AG04449 (cell line): ENCODE measurements at regions of chr11 and their contacts with region 1.

Region 1: DNA sequence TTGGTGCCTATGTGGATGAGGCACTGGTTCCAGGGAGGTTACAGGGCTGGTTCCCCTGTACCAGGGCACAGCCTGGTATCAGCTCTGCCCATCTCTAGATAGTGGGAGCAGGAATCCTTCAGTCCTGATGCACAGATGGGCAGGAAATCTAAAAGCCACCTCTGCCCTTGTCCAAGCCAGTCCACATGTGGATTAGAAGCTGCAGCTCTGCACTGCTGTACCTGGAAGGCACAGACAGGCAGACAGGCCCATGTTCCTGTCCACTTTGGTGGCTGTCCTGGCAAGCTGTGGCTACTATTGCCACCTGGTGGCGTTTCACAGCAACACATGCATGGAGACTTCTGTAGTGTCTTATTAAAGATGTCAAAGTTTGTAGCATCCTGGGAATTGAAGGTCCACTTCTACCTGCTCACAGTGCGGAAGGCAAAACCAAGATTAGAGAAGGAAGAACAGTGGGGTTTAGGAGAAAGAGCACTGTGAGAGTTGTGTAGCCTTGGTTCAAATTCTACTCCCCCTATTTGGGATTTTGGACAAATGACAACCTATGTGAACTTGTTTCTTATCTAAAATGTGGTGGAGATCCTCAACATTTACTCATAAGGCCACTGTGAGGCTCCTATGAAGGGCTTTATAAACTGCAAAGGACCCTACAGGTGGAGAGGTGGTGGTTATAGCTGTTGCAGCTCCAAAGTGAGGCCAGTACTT is 30.1 kb downstream of the NAV2 start:
- DNase-seq: no peak
- H3K4me3 ChIP-seq: no peak overlapping the region
- CTCF ChIP-seq: peak; percentile 78

Region 2: DNA sequence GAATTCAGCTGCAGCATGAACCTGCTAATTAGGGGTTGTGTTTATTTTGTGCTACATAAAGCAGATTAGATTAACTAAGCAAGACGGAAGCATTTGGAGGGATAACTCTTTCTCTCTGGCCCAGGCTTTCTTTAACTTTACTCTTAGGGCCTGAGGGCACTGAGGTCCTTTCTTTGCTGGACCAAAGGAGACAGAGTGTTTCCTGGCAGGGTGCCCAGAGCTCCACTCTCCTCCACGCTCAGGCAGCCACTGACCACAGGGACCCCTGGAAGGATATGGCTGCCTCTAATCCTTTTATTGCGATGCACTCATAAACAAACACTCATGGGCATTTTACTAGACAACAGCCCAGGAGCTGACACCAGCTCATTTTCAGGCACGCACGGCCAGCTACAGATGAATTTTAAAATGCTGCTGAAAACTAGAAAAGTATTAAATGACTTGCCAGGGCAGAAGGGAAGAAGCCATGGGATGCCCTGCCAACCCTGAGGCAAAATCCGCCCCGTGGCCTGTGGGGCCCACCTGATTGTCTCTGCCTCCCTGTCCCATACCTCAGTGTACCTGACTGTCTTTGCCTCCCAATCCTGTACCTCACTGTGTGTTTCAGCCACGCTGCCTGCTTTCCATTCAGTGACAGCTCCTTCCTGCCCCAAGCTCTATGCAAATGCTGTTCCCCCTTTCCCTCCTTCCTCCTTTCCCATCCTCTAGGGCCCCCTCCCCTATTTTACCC is 222.7 kb before region 1 on chr11:
- CTCF ChIA-PET with region 1: no interaction called
- POLR2A ChIA-PET with region 1: no interaction called
- DNase-seq: no peak
- H3K4me3 ChIP-seq: no peak overlapping the region
- CTCF ChIP-seq: no peak

Region 3: DNA sequence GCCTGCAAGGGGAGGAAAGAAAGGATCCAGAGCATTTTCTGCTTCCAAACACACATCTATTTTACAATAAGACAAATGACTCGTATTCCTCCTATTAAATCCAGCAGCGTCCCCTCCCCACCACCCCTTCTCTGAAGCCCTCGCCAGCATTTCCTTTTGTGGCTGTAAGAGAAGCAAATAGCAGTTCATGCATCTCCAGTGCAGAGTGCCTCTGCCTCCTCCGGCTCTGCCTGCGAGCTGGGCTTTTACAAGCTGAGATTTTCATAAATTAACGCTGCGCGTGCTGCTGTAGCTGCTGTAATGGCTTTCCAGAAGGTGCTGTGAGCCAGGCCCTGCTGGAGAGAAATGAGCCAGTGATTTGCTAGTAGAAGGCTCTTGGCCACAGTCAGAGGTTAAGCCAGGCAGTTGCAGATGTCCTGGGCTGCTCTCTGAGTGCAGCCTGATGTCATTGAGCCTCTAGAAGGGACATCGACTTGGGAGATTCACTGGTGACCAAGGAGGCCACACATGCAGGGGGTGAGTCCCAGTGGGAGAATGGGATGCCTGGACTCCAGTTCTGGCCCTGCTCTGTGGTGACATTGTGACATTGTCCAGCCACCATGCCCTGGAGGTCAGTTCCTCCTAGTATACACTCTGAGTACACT is 164.6 kb before region 1 on chr11:
- CTCF ChIA-PET with region 1: interaction called, 81 read pairs
- POLR2A ChIA-PET with region 1: no interaction called
- DNase-seq: no peak
- H3K4me3 ChIP-seq: peak overlapping the region; percentile 4; the same call in 1 of the 2 replicates
- CTCF ChIP-seq: no peak

Region 4: GRCh38 chr11:19712281-19713220 is 30.2 kb before region 1 on chr11 and contains the start of gene NAV2:
- CTCF ChIA-PET with region 1: interaction called, 150 read pairs
- POLR2A ChIA-PET with region 1: no interaction called
- DNase-seq: no peak
- H3K4me3 ChIP-seq: peak within 1 kb of the TSS; percentile 80
- CTCF ChIP-seq: no peak

Region 5: GRCh38 chr11:19723572-19724342 is 19.0 kb before region 1 on chr11:
- CTCF ChIA-PET with region 1: interaction called, 150 read pairs
- POLR2A ChIA-PET with region 1: no interaction called
- DNase-seq: no peak
- H3K4me3 ChIP-seq: no peak overlapping the region
- CTCF ChIP-seq: no peak

Region 6: GRCh38 chr11:19756675-19757475 is 14.1 kb after region 1 on chr11:
- CTCF ChIA-PET with region 1: interaction called, 45 read pairs
- POLR2A ChIA-PET with region 1: no interaction called
- DNase-seq: no peak
- H3K4me3 ChIP-seq: no peak overlapping the region
- CTCF ChIP-seq: no peak